Activated CD4-positive, alpha-beta T cell treated with anti-CD3 and anti-CD28 coated beads, Interleukin-2, amount 10 ng/mL, durations not matched to agents 24 days and 14 days (primary cell): ENCODE measurements at regions of chr19 and their contacts with region 1.

Region 1: DNA sequence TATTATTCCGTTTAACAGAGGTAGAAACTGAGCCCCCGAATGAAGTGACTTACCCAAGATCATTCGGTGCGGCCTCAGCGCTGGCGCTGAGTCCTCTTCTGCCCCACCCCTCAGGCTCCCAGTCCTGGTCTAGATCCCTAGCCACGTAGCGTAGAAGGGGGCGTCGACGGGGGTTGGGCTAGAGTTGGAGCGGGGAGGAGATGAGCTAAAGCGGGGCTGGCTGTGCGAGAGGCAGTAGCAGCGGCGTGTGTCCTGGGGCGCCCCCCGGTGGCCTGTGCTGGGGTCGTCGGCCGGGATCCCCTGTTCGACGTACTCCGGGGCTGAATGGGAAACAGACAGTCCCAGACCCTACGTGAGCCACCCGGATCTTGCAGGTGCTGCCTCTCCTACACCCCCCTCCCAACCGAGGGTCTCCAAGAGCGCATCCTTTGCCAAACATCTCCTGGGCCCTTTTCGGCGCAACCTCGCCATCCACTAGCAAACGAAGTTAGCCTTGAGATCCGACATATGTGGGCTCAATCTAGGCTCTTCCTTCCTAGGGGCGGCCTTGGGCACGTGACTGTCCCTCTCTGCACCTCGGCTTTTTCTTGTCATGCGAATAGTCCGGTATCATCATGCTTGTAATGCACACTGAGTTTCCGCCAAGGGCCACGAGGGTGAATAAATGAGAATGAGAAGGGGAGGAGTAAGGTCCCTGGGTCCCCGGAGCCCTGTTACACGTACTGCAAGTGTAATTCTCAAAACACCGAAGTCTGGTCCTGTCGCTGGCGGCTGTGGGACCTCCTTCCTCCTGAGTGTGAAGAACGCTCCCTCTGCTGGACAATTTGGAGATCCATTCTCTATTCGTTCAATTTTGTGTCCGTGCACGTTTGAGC is 47.7 kb downstream of the CYP4F22 start:
- DNase-seq: peak; percentile 99
- H3K4me3 Mint-ChIP-seq: peak overlapping the region; percentile 85
- H3K27ac Mint-ChIP-seq: peak overlapping the region; percentile 88
- H3K4me1 Mint-ChIP-seq: peaks cover 21% of the 10 kb centered on the region
- H3K27me3 Mint-ChIP-seq: peaks cover 9% of the 10 kb centered on the region

Region 2: DNA sequence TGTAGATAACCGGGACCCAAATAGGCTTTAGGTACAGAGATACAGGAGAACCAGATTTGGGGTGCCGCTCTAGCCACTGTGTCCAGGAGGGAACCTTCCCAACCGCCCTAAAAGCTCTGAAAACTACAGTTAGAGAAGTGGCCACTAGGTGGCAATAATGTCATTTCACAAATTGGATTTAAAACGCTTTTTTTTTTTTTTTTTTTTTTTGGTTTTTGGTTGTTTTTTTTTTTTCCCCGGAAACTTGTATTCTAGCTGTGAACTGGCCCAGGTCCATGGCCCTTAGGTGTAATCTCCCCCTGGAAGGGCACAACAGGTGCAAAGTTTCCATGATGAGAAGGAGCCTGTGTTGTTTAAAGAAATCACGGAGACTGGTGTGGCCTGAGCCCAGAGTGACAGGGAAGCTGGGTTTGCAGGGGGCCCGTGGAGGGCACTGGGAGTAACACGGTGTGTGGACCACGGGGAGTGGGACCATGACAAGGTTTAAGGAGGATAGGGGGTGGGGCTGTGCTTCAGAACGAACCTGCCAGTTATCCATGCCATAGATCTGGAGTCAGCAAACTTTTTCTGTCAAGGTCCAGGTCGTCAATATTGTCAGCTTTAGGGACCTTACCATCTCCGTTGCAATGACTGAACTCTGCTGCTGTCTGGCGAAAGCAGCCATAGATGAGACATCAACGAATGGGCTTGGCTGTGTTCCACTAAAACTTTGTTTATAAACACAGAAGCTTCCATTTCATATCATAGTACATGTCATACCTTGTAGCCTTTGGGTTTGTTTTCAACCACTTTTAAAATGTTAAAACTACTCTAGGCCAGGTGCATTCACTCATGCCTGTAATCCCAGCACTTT is 463.9 kb before region 1 on chr19:
- intact Hi-C with region 1: loop called (anchors 1 kb)
- DNase-seq: peak; percentile 88
- H3K4me3 Mint-ChIP-seq: no peak overlapping the region
- H3K27ac Mint-ChIP-seq: peak overlapping the region; percentile 41
- H3K4me1 Mint-ChIP-seq: peaks cover 3% of the 10 kb centered on the region
- H3K27me3 Mint-ChIP-seq: no peaks in the 10 kb centered on the region

Region 3: DNA sequence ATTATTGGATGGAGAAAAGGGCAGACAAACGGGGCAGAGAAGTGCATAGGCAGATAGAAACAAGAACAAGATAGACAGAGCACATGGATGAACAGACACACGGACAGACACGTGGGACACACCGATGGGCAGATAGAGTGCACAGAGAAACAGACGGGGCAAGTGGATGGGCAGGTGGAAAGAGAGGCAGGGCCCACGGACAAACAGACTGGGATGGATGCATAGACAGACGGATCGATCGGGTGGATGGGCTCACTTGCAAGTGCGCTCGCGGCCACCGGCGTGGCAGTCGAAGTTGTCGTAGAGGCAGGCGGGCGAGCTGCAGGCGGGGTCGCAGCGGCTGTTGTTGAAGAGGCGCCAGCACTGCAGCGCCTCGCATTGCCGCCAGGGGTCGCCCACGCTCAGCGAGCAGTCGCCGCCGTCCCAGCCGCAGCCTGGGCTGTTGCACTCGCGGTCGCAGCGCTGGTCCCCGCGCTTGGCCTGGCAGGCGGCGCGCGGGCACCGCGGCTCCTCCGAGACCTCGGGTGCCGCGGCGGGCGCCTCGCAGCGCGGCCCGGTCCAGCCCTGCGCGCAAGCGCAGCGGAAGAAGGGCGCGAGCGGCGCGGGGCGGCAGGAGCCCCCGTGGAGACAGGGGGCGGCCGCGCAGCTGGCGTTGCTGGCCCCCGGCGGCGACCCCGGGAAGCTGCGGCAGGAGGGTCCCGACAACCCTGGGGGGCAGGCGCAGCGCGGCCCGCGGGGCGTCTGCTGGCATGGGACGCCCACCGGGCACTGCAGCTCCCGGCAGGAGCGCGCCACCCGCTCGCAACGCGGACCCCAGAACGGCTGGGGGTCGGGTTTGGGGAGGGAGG is 378.5 kb before region 1 on chr19:
- intact Hi-C with region 1: loop called (anchors 1 kb)
- DNase-seq: peak; percentile 95
- H3K4me3 Mint-ChIP-seq: peak overlapping the region; percentile 48
- H3K27ac Mint-ChIP-seq: no peak overlapping the region
- H3K4me1 Mint-ChIP-seq: peaks cover 4% of the 10 kb centered on the region
- H3K27me3 Mint-ChIP-seq: peaks cover 6% of the 10 kb centered on the region

Region 4: DNA sequence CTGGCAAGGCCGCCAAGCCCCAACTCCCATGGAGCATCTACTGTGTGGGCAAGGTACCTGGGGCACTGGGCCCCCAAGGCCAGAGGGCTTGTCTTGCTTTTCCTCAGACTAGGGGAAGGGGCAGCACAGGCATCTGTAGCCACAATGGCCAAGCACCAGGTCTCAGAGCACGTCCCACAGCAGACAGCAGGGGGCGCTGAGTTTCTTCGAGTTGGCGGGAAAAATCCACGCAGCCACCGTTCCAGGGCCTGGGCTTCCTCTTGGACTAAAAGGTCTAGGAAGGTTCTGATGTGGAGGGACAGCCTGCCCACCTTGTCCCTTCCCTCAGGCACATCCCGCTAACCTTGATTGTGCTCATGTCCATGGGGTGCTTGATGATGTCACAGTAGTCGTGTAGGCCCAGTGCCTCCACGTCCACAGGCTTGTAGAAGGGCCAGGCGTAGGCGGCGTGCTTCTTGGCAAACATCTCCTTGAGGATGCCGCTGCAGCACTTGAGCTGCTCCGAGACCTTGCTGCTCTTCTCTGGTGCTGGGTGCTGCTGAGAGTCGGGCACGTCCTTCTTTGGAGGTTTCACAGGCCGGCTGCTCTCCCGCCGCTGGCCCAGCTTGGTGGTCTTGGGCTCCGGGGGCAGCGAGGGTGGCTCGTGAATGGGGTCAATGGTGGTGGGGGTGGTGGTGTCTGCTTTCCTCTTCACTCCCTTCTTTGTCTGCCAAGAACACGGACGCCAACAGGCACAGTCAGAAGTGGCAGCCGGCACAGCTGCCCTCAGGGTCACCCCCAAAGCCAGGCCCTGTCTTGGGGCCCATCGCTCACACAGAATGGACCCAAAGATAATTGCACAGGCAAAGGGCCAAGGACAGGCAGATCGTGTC is 291.7 kb before region 1 on chr19:
- intact Hi-C with region 1: loop called (anchors 1 kb)
- DNase-seq: peak; percentile 92
- H3K4me3 Mint-ChIP-seq: no peak overlapping the region
- H3K27ac Mint-ChIP-seq: no peak overlapping the region
- H3K4me1 Mint-ChIP-seq: peaks cover 2% of the 10 kb centered on the region
- H3K27me3 Mint-ChIP-seq: no peaks in the 10 kb centered on the region

Region 5: GRCh38 chr19:15418588-15419412 is 137.2 kb before region 1 on chr19 and contains the start of gene AKAP8L:
- intact Hi-C with region 1: loop called (anchors 1 kb)
- DNase-seq: peak; percentile 100
- H3K4me3 Mint-ChIP-seq: peak within 1 kb of the TSS; percentile 100
- H3K27ac Mint-ChIP-seq: peak within 1 kb of the TSS; percentile 100
- H3K4me1 Mint-ChIP-seq: peaks cover 33% of the 10 kb centered on the region
- H3K27me3 Mint-ChIP-seq: no peaks in the 10 kb centered on the region
- total RNA-seq, gene AKAP8L: 76.8 and 80.1 TPM in 2 replicates

Region 6: GRCh38 chr19:15432629-15433518 is 123.1 kb before region 1 on chr19:
- intact Hi-C with region 1: loop called (anchors 1 kb)
- DNase-seq: peak; percentile 99
- H3K4me3 Mint-ChIP-seq: peak overlapping the region; percentile 97
- H3K27ac Mint-ChIP-seq: peak overlapping the region; percentile 97
- H3K4me1 Mint-ChIP-seq: peaks cover 28% of the 10 kb centered on the region
- H3K27me3 Mint-ChIP-seq: peaks cover 2% of the 10 kb centered on the region